ENCODE measurements at regions of chrX and their contacts with region 1.

Region 1: DNA sequence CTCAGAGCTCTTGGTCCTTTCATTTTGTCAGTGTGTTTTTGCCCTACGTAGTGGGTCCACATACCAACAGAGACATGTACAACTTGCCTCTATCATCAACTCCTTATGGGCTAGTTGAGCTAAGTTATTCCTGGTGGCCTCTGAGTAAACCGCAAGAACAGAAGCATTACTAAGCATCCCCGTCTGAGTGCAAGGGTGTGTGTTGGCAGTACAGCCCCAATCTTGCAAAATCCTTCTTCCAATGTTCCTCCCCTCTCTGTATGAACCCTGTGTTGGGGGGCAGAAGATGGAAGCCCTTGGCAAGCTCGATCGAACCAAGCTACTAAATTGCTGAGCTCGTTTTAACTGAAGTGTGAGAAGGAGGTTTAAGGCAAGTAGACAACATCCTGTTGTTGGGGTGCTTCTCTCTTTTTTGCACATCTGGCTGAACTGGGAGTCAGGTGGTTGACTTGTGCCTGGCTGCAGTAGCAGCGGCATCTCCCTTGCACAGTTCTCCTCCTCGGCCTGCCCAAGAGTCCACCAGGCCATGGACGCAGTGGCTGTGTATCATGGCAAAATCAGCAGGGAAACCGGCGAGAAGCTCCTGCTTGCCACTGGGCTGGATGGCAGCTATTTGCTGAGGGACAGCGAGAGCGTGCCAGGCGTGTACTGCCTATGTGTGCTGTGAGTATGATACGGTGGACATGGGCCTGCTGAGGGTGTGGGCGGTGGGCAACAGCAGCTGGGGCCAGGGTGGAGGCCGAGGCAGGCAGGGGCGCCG is at the start of gene SH2D1A:
- DNase-seq: peak in 8 of 9 donors; percentile 20 to 50 (median 34)
- ATAC-seq: peak; percentile 70
- H3K4me3 ChIP-seq: peak within 1 kb of the TSS; percentile 62
- H3K4me3 Mint-ChIP-seq: peak within 1 kb of the TSS; percentile 79 to 99 (median 96)
- H3K27ac ChIP-seq: peak within 1 kb of the TSS; percentile 72
- H3K27ac Mint-ChIP-seq: peak within 1 kb of the TSS; percentile 85 to 98 (median 95)
- H3K4me1 ChIP-seq: peaks cover 36 to 47% of the 10 kb centered on the region in 2 donors
- H3K4me1 Mint-ChIP-seq: peaks cover 12 to 51% (median 44%) of the 10 kb centered on the region in 7 donors
- H3K27me3 ChIP-seq: no peaks in the 10 kb centered on the region
- H3K27me3 Mint-ChIP-seq: no peaks in the 10 kb centered on the region
- total RNA-seq, gene SH2D1A: 23.8 to 48.2 (median 37.9) TPM

Region 2: GRCh38 chrX:122850326-122850725 is 1496.0 kb before region 1 on chrX:
- CTCF ChIA-PET with region 1: no interaction called
- POLR2A ChIA-PET with region 1: no interaction called
- intact Hi-C with region 1: no loop called
- DNase-seq: no peak
- ATAC-seq: no peak
- H3K4me3 ChIP-seq: no peak overlapping the region
- H3K4me3 Mint-ChIP-seq: no peak overlapping the region
- H3K27ac ChIP-seq: no peak overlapping the region
- H3K27ac Mint-ChIP-seq: no peak overlapping the region
- H3K4me1 ChIP-seq: no peaks in the 10 kb centered on the region
- H3K4me1 Mint-ChIP-seq: no peaks in the 10 kb centered on the region
- H3K27me3 ChIP-seq: no peaks in the 10 kb centered on the region
- H3K27me3 Mint-ChIP-seq: peaks cover 0 to 7% (median 0%) of the 10 kb centered on the region in 5 donors

Region 3: GRCh38 chrX:123859846-123860838 is 486.2 kb before region 1 on chrX and contains the start of gene XIAP:
- CTCF ChIA-PET with region 1: no interaction called
- POLR2A ChIA-PET with region 1: no interaction called
- intact Hi-C with region 1: loop called in 1 of 2 experiments (anchors 10 kb)
- DNase-seq: peak; percentile 48 to 70 (median 62)
- ATAC-seq: peak; percentile 91
- H3K4me3 ChIP-seq: peak within 1 kb of the TSS; percentile 74
- H3K4me3 Mint-ChIP-seq: peak within 1 kb of the TSS; percentile 83 to 94 (median 90)
- H3K27ac ChIP-seq: peak within 1 kb of the TSS; percentile 93
- H3K27ac Mint-ChIP-seq: peak within 1 kb of the TSS; percentile 85 to 98 (median 94)
- H3K4me1 ChIP-seq: no peaks in the 10 kb centered on the region
- H3K4me1 Mint-ChIP-seq: peaks cover 10 to 29% (median 24%) of the 10 kb centered on the region in 7 donors
- H3K27me3 ChIP-seq: no peaks in the 10 kb centered on the region
- H3K27me3 Mint-ChIP-seq: no peaks in the 10 kb centered on the region
- total RNA-seq, gene XIAP: 23.5 to 56.1 (median 49.3) TPM

Region 4: GRCh38 chrX:124098089-124098488 is 248.2 kb before region 1 on chrX:
- CTCF ChIA-PET with region 1: no interaction called
- POLR2A ChIA-PET with region 1: no interaction called
- intact Hi-C with region 1: loop called in 1 of 2 experiments (anchors 10 kb)
- DNase-seq: peak in 5 of 9 donors; percentile 8 to 34 (median 30)
- ATAC-seq: peak; percentile 55
- H3K4me3 ChIP-seq: no peak overlapping the region
- H3K4me3 Mint-ChIP-seq: no peak overlapping the region
- H3K27ac ChIP-seq: no peak overlapping the region
- H3K27ac Mint-ChIP-seq: no peak overlapping the region
- H3K4me1 ChIP-seq: no peaks in the 10 kb centered on the region
- H3K4me1 Mint-ChIP-seq: peaks cover 0 to 2% (median 0%) of the 10 kb centered on the region in 7 donors
- H3K27me3 ChIP-seq: no peaks in the 10 kb centered on the region
- H3K27me3 Mint-ChIP-seq: no peaks in the 10 kb centered on the region

Region 5: DNA sequence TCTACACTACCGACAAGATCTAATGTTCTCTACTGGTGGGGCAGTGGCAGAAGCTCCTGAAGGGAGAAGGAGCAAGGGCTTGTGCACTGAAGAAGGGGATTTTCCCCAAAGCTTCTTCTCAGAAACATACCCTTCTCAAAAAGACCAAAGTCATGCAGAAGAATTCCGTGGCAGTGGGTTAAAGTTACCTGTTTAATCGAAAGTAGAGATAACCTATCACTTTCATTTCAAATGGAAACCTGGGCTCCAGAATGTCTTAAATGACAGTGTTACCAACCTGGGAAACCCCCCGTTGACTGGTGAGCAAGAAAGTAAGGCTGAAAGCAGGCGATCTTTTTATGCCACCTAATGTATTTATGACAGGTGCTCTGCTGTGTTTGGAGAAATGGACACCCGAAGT is 106.4 kb before region 1 on chrX:
- CTCF ChIA-PET with region 1: no interaction called
- POLR2A ChIA-PET with region 1: no interaction called
- intact Hi-C with region 1: loop called in 1 of 2 experiments (anchors 5 kb)
- DNase-seq: peak in 3 of 9 donors; percentile 15 to 54 (median 35)
- ATAC-seq: peak; percentile 58
- H3K4me3 ChIP-seq: no peak overlapping the region
- H3K4me3 Mint-ChIP-seq: peak overlapping the region in 7 of 10 donors; percentile 12 to 60 (median 54)
- H3K27ac ChIP-seq: no peak overlapping the region
- H3K27ac Mint-ChIP-seq: peak overlapping the region in 3 of 9 donors; percentile 8 to 66 (median 34)
- H3K4me1 ChIP-seq: peaks cover 0 to 7% of the 10 kb centered on the region in 2 donors
- H3K4me1 Mint-ChIP-seq: peaks cover 8 to 47% (median 35%) of the 10 kb centered on the region in 7 donors
- H3K27me3 ChIP-seq: no peaks in the 10 kb centered on the region
- H3K27me3 Mint-ChIP-seq: peaks cover 0 to 2% (median 0%) of the 10 kb centered on the region in 5 donors

Region 6: DNA sequence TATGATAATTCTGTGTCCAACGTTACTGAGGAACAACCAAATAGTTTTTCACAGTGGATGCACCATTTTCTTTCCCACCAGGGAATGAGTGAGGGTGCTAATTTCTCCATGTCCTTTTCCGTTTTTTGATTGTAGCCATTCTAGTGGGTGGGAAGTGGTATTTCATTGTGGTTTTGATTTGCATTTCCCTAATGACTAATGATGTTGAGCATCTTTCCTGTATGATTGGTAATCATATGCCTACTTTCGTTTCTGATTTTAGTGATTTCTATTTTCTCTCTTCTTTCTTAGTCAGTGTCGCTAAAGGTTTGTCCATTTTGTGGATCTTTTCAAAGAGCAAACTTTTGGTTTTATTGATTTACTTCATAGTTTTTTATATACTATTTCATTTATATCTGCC is 45.9 kb before region 1 on chrX:
- CTCF ChIA-PET with region 1: no interaction called
- POLR2A ChIA-PET with region 1: no interaction called
- intact Hi-C with region 1: loop called in 1 of 2 experiments (anchors 5 kb)
- DNase-seq: no peak
- ATAC-seq: no peak
- H3K4me3 ChIP-seq: no peak overlapping the region
- H3K4me3 Mint-ChIP-seq: no peak overlapping the region
- H3K27ac ChIP-seq: no peak overlapping the region
- H3K27ac Mint-ChIP-seq: no peak overlapping the region
- H3K4me1 ChIP-seq: no peaks in the 10 kb centered on the region
- H3K4me1 Mint-ChIP-seq: peaks cover 0 to 16% (median 0%) of the 10 kb centered on the region in 7 donors
- H3K27me3 ChIP-seq: no peaks in the 10 kb centered on the region
- H3K27me3 Mint-ChIP-seq: no peaks in the 10 kb centered on the region

Region 7: DNA sequence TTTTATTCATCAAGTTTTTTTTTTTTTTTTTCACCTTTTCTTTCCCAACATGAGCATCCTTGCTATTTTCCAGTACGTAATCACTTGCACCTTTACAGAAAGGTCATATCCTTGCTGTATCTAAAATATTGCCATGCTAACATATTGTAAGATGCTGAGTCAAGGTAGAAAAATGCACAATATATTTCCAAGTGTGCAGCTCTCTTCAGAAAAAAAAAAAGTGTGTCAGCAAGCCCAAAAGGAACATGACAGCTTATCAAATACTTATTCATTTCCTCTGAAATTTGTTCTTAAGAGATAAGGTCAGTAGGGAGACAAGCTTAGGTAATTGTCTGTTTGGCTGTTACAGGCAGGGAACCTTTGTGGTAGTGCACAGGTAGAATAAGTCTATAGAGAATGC is 27.1 kb after region 1 on chrX:
- CTCF ChIA-PET with region 1: no interaction called
- POLR2A ChIA-PET with region 1: interaction called, 3 read pairs
- intact Hi-C with region 1: loop called in 1 of 2 experiments (anchors 1 kb)
- DNase-seq: no peak
- ATAC-seq: no peak
- H3K4me3 ChIP-seq: no peak overlapping the region
- H3K4me3 Mint-ChIP-seq: no peak overlapping the region
- H3K27ac ChIP-seq: no peak overlapping the region
- H3K27ac Mint-ChIP-seq: peak overlapping the region in 2 of 9 donors; percentile 1 to 48
- H3K4me1 ChIP-seq: peaks cover 0 to 11% of the 10 kb centered on the region in 2 donors
- H3K4me1 Mint-ChIP-seq: peaks cover 0 to 36% (median 23%) of the 10 kb centered on the region in 7 donors
- H3K27me3 ChIP-seq: no peaks in the 10 kb centered on the region
- H3K27me3 Mint-ChIP-seq: no peaks in the 10 kb centered on the region